HCT116 (cell line): ENCODE measurements at regions of chr2 and their contacts with region 1.

Region 1: DNA sequence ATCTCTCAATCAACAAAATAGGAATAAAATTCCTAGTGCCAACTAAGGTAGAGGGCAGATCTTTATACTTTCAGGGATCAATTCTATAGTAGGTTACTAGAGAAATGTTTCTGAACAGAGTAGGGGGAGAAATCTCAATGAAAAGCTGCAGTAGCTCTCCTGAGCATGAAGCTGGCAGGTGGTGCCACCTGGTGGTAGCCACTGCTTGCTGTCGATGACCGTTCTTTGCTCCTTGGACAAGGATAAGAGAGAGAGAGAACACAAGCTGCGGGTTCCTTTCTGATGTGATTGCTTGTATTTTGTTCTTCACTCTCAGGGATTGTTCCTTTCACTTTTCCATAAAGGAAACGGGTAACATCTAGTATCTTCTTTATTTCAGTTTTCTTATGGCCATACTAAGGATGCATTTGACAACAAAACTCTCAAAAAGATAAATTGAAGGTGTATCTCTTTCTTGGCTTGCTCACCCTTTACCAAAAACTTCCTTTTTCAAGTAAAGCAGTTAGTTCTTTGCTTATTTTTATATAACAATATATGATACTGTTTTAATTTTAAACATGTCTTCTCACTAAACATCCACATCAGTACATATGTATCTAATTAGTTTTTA is 18.6 kb upstream of the MRPL19 start:
- DNase-seq: peak; percentile 57
- ATAC-seq: peak; percentile 97
- H3K4me3 ChIP-seq: no peak overlapping the region
- H3K27ac ChIP-seq: no peak overlapping the region
- H3K4me1 ChIP-seq: no peaks in the 10 kb centered on the region
- H3K27me3 ChIP-seq: no peaks in the 10 kb centered on the region
- CTCF ChIP-seq: peak; percentile 60 to 97 (median 96); a peak in 5 of 6 replicates
- POLR2A ChIP-seq: no peak
- RAD21 ChIP-seq: peak; percentile 74

Region 2: GRCh38 chr2:75466708-75467311 is 161.2 kb before region 1 on chr2:
- CTCF ChIA-PET with region 1: interaction called, 23 read pairs
- POLR2A ChIA-PET with region 1: no interaction called
- RAD21 ChIA-PET with region 1: interaction called in 1 of 2 experiments, 4 read pairs
- intact Hi-C with region 1: loop called (anchors 1 kb)
- DNase-seq: peak; percentile 23
- ATAC-seq: peak; percentile 77
- H3K4me3 ChIP-seq: no peak overlapping the region
- H3K27ac ChIP-seq: no peak overlapping the region
- H3K4me1 ChIP-seq: no peaks in the 10 kb centered on the region
- H3K27me3 ChIP-seq: peaks cover 47% of the 10 kb centered on the region
- CTCF ChIP-seq: peak; percentile 34 to 81 (median 66); a peak in 5 of 6 replicates
- POLR2A ChIP-seq: no peak
- RAD21 ChIP-seq: peak; percentile 55